ENCODE measurements at regions of chr10 and their contacts with region 1.

Region 1: GRCh38 chr10:15433850-15434537 is 62.9 kb upstream of the FAM171A1 start:
- DNase-seq: no peak

Region 2: DNA sequence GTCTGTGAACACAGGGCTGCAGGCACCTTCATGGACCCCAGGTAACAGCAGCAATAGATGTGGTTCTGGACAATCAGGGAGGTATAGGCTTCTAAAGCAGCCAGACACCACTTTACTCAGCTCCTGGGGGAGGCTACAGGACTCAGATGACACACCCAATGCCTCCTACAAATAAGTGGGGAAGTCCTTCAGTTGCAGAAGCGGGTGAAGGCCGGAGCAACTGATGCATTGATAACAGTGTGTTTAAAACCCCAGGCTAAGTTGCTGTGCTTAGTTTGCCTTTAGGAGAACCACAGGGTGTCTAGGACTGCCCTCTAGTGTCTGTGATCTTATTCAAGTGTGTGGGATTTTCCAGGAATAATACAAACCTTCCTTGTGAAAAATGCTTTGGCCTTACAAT is 291.6 kb after region 1 on chr10:
- intact Hi-C with region 1: loop called (anchors 10 kb)
- DNase-seq: no peak

Measured in posterior vena cava (tissue), 2 donors.